ENCODE measurements at regions of chr1 and their contacts with region 1.

Region 1: DNA sequence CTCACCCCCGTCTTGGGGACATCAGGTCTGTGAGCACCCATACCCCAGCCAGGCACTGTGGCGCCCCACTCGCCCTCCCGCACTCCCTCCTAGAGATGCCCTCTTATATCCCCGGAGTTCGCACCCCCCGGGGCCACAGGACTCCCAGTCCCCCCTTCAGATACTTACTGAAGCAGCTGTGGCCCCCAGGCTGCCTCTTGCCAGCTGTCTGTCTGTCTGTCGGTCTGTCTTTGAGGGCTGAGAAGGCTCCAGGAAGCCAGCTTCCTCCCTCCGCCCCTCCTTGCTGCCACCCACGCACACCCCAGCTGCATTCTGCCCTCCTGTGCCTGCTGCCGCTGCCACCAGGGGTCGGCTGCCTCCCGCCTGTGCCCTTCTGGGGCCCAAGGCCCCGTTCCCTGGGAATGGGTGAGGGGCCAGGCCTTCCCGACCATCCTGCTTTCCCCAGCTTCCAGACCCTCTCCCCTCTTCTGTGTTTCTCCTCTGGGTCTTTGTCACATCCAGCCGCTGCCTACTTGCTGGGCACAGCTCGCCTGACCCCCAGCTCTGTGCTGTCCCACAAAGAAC is at the start of gene PTPN7:
- DNase-seq: peak; percentile 84
- H3K4me3 Mint-ChIP-seq: peak within 1 kb of the TSS; percentile 98
- H3K27ac Mint-ChIP-seq: peak within 1 kb of the TSS; percentile 99
- H3K4me1 Mint-ChIP-seq: peaks cover 86% of the 10 kb centered on the region
- H3K27me3 Mint-ChIP-seq: no peaks in the 10 kb centered on the region
- total RNA-seq, gene PTPN7: 228 to 231 TPM

Region 2: GRCh38 chr1:202144402-202145067 is 15.9 kb before region 1 on chr1 and contains the start of gene ARL8A:
- CTCF ChIA-PET with region 1: interaction called, 17 read pairs
- POLR2A ChIA-PET with region 1: interaction called, 174 read pairs
- DNase-seq: peak; percentile 78
- H3K4me3 Mint-ChIP-seq: peak within 1 kb of the TSS; percentile 84
- H3K27ac Mint-ChIP-seq: peak within 1 kb of the TSS; percentile 87
- H3K4me1 Mint-ChIP-seq: peaks cover 41% of the 10 kb centered on the region
- H3K27me3 Mint-ChIP-seq: no peaks in the 10 kb centered on the region
- total RNA-seq, gene ARL8A: 62.4 to 63.8 TPM

Region 3: GRCh38 chr1:202170726-202171125 is 10.3 kb after region 1 on chr1:
- CTCF ChIA-PET with region 1: interaction called, 26 read pairs
- POLR2A ChIA-PET with region 1: interaction called, 14 read pairs
- DNase-seq: no peak
- H3K4me3 Mint-ChIP-seq: no peak overlapping the region
- H3K27ac Mint-ChIP-seq: no peak overlapping the region
- H3K4me1 Mint-ChIP-seq: peaks cover 23% of the 10 kb centered on the region
- H3K27me3 Mint-ChIP-seq: no peaks in the 10 kb centered on the region

Region 4: DNA sequence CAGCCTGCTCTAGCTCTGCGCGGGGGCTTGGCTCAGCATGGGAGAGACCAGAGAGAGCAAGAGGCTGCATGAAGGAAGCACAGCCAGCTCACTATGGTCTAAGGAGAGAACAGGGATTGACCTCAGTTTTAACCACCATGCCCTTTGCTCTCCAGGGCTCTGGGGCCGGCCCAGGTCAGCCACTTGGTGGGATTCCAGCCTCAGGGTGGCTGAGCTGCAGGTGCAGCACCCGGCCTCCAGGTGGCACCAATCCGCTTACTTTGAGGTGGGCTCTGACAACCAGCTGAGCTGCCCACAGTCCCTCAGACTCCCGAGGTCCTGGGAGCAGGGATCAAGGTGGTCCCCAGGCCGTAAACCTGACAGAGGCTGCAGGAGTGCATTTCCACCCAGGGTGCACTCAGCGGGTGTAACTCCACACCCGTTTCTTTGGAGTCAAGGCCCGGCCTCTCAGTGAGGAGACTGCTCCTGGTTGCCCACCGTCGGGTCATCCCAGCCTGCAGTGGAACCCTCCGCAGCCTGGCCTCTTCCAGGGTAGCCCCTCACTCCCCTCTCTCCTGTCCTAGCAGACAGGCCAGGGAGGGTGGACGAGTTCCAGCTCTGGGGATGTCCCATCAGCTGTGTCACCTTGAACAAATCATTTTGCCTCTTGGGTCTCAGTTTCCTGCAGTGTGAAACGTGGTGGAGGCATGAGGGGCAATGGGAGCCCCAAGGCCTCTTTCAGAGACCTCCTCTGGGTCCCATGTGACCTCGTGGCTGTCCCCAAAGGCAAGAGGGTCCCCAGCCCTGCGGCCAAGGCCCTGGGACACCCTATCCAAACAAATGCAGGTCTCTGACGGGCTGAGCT is 32.5 kb after region 1 on chr1:
- CTCF ChIA-PET with region 1: interaction called, 11 read pairs
- POLR2A ChIA-PET with region 1: interaction called, 3 read pairs
- DNase-seq: peak; percentile 44
- H3K4me3 Mint-ChIP-seq: no peak overlapping the region
- H3K27ac Mint-ChIP-seq: no peak overlapping the region
- H3K4me1 Mint-ChIP-seq: no peaks in the 10 kb centered on the region
- H3K27me3 Mint-ChIP-seq: peaks cover 29% of the 10 kb centered on the region

Region 5: GRCh38 chr1:202343652-202344349 is 183.3 kb after region 1 on chr1:
- CTCF ChIA-PET with region 1: interaction called, 3 read pairs
- POLR2A ChIA-PET with region 1: interaction called, 31 read pairs
- DNase-seq: no peak
- H3K4me3 Mint-ChIP-seq: peak overlapping the region; percentile 52
- H3K27ac Mint-ChIP-seq: peak overlapping the region; percentile 72
- H3K4me1 Mint-ChIP-seq: peaks cover 44% of the 10 kb centered on the region
- H3K27me3 Mint-ChIP-seq: no peaks in the 10 kb centered on the region

Region 6: DNA sequence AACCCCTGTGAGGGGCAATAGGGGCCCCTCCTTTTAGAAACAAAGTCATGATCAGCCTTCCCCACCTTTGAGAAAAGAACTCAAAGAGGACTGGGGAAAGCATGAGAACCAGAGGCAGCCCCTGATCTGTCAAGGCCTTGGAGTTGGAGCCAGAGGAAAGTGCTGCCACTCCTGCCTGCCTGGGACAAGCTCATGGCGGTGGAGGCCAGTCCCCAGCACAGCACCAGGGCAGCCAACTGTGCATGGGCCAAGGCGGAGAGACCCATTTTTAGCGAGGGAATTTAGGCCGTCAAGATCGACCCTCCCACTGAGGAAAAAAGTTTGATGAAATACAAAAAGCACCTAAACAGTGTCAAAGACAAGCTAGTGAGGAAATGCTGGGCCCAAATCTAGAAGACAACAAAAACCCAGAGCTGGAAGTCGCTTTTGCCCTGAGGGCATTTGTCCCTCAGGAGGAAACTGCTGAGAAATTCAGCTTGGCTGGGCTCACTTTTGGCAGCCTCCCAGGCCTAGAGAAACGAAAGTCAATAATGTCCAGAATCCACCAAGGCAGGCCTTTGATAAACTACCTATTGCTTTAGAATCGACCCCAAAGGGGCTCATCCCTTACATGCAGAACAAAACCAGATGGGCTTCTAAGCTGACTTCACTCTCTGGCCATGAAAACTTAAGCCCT is 510.8 kb after region 1 on chr1:
- CTCF ChIA-PET with region 1: no interaction called
- POLR2A ChIA-PET with region 1: no interaction called
- DNase-seq: no peak
- H3K4me3 Mint-ChIP-seq: no peak overlapping the region
- H3K27ac Mint-ChIP-seq: no peak overlapping the region
- H3K4me1 Mint-ChIP-seq: no peaks in the 10 kb centered on the region
- H3K27me3 Mint-ChIP-seq: peaks cover 13% of the 10 kb centered on the region

Measured in activated CD4-positive, alpha-beta memory T cell treated with anti-CD3 and anti-CD28 coated beads, Interleukin-2, amount 10 ng/mL, durations not matched to agents 7 days and 5 days (primary cell).